ENCODE measurements at regions of chr20 and their contacts with region 1.

Region 1: DNA sequence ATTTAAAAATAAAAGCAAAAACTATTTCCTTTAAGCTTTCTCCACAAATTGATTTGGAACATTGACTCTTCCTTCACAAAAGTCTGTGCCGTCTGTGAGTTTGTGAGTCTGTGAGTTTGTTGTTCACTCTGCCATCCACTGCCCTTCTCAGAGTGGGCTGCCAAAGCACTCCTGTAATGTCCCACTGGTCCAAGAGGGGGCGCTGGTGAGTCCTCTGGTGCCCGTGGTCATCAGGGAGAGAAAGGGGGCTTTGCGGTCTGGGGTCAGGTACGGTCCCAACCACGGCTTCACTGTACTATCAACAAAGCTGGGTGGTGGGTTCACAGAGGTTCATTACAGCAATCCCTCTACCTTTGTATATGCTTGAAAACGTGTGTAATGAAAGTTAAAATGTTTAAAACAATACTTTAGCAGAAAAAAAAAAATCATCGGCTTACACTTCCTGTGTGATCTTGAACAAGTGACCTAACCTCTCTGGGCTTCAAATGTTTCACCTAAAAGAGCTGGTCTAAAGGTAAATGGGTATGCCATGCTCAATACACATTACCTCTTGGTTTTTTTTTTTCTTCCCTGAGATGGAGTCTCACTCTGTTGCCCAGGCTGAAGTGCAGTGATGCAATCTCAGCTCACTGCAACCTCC is 5.6 kb upstream of the ANKRD60 start:
- DNase-seq: no peak
- H3K4me3 ChIP-seq: no peak overlapping the region
- H3K27ac ChIP-seq: no peak overlapping the region
- H3K4me1 ChIP-seq: no peaks in the 10 kb centered on the region
- H3K27me3 ChIP-seq: peaks cover 3% of the 10 kb centered on the region
- CTCF ChIP-seq: peak; percentile 53

Region 2: GRCh38 chr20:58650776-58651558 is 417.0 kb after region 1 on chr20 and contains the start of gene STX16:
- intact Hi-C with region 1: loop called (anchors 5 kb)
- DNase-seq: peak; percentile 90
- H3K4me3 ChIP-seq: peak within 1 kb of the TSS; percentile 85
- H3K27ac ChIP-seq: peak within 1 kb of the TSS; percentile 97
- H3K4me1 ChIP-seq: peaks cover 60% of the 10 kb centered on the region
- H3K27me3 ChIP-seq: no peaks in the 10 kb centered on the region
- CTCF ChIP-seq: peak; percentile 70
- total RNA-seq, gene STX16: 28.0 TPM

Region 3: DNA sequence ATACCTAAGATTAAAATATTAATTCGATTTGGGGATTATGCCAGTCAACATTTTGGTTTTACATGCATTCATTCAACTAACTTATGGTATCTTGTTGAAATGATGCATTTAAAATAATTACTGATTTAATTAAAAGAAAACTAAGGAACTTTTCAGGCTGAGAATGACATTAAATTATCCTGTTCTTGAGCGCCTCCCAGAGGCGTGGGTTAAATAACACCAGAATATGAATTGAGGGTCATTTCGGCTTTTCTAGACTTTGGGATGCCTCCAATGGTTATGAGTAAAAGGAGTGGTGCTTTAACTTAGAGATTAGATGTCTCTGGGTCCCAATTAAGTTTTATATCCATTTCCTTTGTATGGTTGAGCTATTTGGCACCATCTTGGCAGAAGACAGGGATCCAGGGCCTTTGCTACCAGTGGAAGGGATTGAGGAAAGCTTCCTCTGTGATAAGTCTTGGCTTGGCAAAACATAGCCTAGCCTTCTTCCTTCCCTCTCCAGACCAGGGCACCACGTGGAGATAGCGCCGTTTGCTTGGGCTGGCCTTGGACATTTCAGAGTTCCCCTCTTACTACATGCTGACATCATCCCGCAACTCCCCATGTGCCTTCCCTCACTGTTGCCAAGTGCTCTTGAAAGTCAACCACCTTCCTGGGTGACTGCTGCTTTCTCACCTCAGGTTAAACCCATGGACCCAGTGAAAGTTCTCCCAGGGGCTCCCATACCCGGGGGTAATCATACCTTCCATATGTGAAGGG is 647.2 kb after region 1 on chr20:
- intact Hi-C with region 1: no loop called
- DNase-seq: no peak
- H3K4me3 ChIP-seq: no peak overlapping the region
- H3K27ac ChIP-seq: no peak overlapping the region
- H3K4me1 ChIP-seq: no peaks in the 10 kb centered on the region
- H3K27me3 ChIP-seq: no peaks in the 10 kb centered on the region
- CTCF ChIP-seq: no peak